Activated naive CD8-positive, alpha-beta T cell treated with anti-CD3 and anti-CD28 coated beads, Interleukin-2, amount 10 ng/mL, durations not matched to agents 7 days and 5 days (primary cell): ENCODE measurements at regions of chr2 and their contacts with region 1.

Region 1: DNA sequence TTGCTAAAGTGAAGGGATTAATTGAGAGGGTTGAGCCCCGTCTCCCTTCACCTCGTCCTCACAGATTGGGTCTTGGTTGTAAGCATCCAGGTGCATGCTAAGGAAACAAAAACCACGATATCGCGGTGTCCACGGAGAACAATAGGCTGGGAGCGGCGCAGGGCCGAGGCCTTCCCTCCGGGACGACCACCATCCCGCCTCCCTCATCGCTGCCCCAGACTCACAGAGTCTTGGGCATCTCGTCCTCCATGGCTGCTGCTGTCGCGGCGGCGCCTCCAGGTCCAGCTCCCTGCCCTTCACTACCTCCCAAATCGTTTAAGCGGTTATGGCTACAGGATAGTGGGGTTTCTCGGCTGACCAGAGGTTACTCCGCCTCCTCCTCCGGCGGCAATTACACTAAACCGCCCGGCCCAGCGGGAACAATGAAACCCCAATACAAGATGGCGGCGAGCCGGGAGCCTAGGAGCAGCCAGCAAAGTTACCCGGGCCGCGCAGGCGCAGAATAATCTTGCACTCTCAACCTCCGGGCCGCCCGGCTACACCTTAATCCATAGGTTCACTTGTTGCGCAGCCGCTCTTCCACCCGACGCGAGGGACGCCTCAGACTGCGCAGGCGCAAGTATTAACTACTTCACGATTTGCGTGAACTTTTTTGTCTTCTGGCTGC is at the start of gene TIA1:
- DNase-seq: peak; percentile 97
- ATAC-seq: peak; percentile 99
- H3K4me3 Mint-ChIP-seq: peak within 1 kb of the TSS; percentile 99
- H3K27ac Mint-ChIP-seq: peak within 1 kb of the TSS; percentile 99
- H3K4me1 Mint-ChIP-seq: peaks cover 21% of the 10 kb centered on the region
- H3K27me3 Mint-ChIP-seq: no peaks in the 10 kb centered on the region
- total RNA-seq, gene TIA1: 160 TPM

Region 2: DNA sequence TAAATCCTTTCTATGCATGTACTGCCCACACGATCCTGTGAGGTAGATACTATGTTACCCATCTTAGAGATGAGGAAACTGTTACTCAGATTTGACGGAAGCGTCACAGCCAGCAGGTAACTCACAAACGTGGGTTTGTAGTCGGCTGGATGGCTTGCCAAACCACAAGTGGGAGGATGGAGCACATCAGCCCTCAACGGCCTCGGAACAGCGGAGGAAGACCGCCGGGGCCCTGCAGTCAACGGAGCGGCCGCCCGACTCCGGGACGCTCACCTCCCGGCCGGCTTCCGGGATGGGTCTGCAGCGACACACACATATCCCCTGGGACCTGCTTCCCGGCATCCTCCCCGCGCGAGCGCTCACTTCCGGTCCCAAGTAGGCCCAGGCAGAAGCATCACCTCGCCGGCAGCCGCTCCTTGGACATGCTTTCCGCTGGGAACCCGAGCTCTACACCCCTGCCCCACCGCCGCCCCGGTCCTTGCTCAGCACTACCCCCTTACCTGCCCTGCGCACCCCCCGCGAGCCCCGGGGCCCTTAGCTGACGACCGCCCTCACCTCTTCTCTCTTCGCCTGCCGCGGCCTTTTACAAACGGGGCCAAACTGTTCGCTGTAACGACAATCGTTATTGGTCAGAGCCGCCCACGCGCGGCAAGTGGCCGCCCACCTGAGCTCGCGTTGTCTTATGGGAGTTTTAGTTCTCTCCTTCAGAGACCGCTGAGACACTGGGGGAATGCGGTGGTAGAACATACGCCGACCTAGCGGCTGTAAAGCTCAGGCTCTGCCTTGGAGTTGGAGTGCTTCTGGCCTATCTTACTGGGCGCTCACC is 57.7 kb before region 1 on chr2 and contains the start of gene C2orf42:
- POLR2A ChIA-PET with region 1: interaction called, 10 read pairs
- DNase-seq: peak; percentile 93
- ATAC-seq: peak; percentile 85
- H3K4me3 Mint-ChIP-seq: peak within 1 kb of the TSS; percentile 95
- H3K27ac Mint-ChIP-seq: peak within 1 kb of the TSS; percentile 99
- H3K4me1 Mint-ChIP-seq: peaks cover 14% of the 10 kb centered on the region
- H3K27me3 Mint-ChIP-seq: peaks cover 2% of the 10 kb centered on the region
- total RNA-seq, gene C2orf42: 30.9 to 33.8 TPM

Region 3: GRCh38 chr2:70456585-70457495 is 208.5 kb after region 1 on chr2:
- POLR2A ChIA-PET with region 1: no interaction called
- DNase-seq: no peak
- ATAC-seq: peak; percentile 25
- H3K4me3 Mint-ChIP-seq: no peak overlapping the region
- H3K27ac Mint-ChIP-seq: peak overlapping the region; percentile 48
- H3K4me1 Mint-ChIP-seq: peaks cover 12% of the 10 kb centered on the region
- H3K27me3 Mint-ChIP-seq: peaks cover 4% of the 10 kb centered on the region